WTC11 (cell line): ENCODE measurements at regions of chr2 and their contacts with region 1.

Region 1: DNA sequence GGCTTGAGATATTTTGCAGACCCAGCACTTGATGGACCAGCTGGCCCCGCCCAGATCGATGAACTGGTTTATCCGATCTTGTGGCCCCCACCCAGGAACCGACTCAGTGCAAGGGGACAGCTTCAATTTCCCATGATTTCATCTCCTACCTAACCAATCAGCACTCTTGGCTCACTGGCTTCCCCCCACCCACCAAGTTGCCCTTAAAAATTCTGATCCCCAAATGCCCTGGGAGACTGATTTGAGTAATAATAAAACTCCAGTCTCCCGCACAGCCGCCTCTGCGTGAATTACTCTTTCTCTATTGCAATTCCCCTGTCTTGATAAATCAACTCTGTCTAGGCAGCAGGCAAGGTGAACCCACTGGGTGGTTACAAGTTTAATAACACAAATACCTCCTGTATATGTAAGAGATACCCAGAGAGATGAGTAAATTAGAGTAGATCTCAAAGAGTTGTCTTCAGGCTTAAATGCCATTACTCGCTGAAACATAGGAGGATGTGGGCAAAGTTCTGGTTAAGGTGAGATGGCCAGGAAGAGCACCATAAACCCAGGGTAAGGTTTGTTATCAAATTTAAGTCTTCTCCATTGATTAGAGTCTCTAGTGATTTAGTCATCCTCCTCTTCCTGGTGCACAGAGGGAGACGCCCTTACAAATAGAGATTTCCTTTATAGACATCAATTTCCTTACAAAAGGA is 222.8 kb downstream of the ARL4C start:
- DNase-seq: no peak
- ATAC-seq: no peak
- H3K4me3 Mint-ChIP-seq: no peak overlapping the region
- H3K27ac Mint-ChIP-seq: no peak overlapping the region
- H3K4me1 Mint-ChIP-seq: no peaks in the 10 kb centered on the region
- H3K27me3 Mint-ChIP-seq: peaks cover 1% of the 10 kb centered on the region; the same call in 1 of the 2 replicates
- CTCF ChIP-seq: no peak

Region 2: DNA sequence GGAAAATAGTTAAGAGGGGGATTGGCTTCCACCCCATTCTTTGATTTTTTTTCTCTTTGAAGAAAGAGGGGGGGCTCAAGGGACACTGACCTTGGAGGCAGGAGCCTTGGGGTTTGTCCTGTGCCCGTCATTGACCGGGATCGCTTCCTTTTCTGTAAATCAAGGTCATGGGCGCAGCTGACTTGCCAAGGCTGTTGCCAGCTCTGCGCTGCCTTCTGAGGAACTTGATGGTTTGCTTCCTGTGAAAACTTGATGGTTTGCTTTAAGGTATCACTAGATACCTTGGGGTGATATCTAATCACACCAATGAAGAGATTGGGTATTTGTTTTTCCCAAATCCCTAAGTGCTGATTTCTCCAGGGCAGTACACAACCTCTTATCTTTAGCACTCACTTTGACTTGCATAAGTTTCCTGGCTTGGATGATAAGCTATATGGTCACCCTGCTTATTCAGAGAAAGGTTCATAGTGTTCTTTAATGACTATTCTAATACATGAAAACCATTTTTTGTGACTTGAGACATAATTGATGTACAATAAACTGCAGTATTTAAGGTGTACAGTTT is 863.8 kb before region 1 on chr2:
- CTCF ChIA-PET with region 1: no interaction called
- POLR2A ChIA-PET with region 1: interaction called, 10 read pairs
- DNase-seq: no peak
- ATAC-seq: no peak
- H3K4me3 Mint-ChIP-seq: no peak overlapping the region
- H3K27ac Mint-ChIP-seq: no peak overlapping the region
- H3K4me1 Mint-ChIP-seq: peaks cover 8% of the 10 kb centered on the region
- H3K27me3 Mint-ChIP-seq: no peaks in the 10 kb centered on the region
- CTCF ChIP-seq: no peak